GM12878 (cell line): ENCODE measurements at regions of chr2 and their contacts with region 1.

Region 1: GRCh38 chr2:190679813-190680591 is 31.1 kb downstream of the NAB1 start:
- DNase-seq: peak; percentile 54
- ATAC-seq: peak; percentile 81
- H3K4me3 ChIP-seq: peak overlapping the region; percentile 6; the same call in 1 of the 2 replicates
- H3K27ac ChIP-seq: peak overlapping the region; percentile 87
- H3K4me1 ChIP-seq: peaks cover 43% of the 10 kb centered on the region
- H3K27me3 ChIP-seq: no peaks in the 10 kb centered on the region
- CTCF ChIP-seq: peak; percentile 65 to 85 (median 82)
- EP300 ChIP-seq: 0 out of 4 replicates have a peak, but pooled peaks of 1 of the 2 experiments have one; percentile 42
- POLR2A ChIP-seq: peak; percentile 86
- RAD21 ChIP-seq: peak; percentile 84

Region 2: GRCh38 chr2:189848276-189848675 is 831.7 kb before region 1 on chr2:
- CTCF ChIA-PET with region 1: no interaction called
- POLR2A ChIA-PET with region 1: no interaction called
- RAD21 ChIA-PET with region 1: no interaction called
- SMC1A ChIA-PET with region 1: no interaction called
- in situ Hi-C with region 1: no loop called
- intact Hi-C with region 1: no loop called
- DNase-seq: no peak
- ATAC-seq: no peak
- H3K4me3 ChIP-seq: no peak overlapping the region
- H3K27ac ChIP-seq: no peak overlapping the region
- H3K4me1 ChIP-seq: no peaks in the 10 kb centered on the region
- H3K27me3 ChIP-seq: no peaks in the 10 kb centered on the region
- CTCF ChIP-seq: no peak
- EP300 ChIP-seq: no peak
- POLR2A ChIP-seq: no peak
- RAD21 ChIP-seq: no peak

Region 3: GRCh38 chr2:190382851-190383250 is 297.2 kb before region 1 on chr2:
- CTCF ChIA-PET with region 1: interaction called, 41 read pairs
- POLR2A ChIA-PET with region 1: no interaction called
- RAD21 ChIA-PET with region 1: interaction called, 10 read pairs
- SMC1A ChIA-PET with region 1: interaction called, 41 read pairs
- in situ Hi-C with region 1: no loop called
- intact Hi-C with region 1: loop called (anchors 1 kb)
- DNase-seq: peak; percentile 43
- ATAC-seq: peak; percentile 98
- H3K4me3 ChIP-seq: no peak overlapping the region
- H3K27ac ChIP-seq: no peak overlapping the region
- H3K4me1 ChIP-seq: no peaks in the 10 kb centered on the region
- H3K27me3 ChIP-seq: no peaks in the 10 kb centered on the region
- CTCF ChIP-seq: peak; percentile 70 to 73 (median 72)
- EP300 ChIP-seq: no peak
- POLR2A ChIP-seq: no peak
- RAD21 ChIP-seq: peak; percentile 98

Region 4: DNA sequence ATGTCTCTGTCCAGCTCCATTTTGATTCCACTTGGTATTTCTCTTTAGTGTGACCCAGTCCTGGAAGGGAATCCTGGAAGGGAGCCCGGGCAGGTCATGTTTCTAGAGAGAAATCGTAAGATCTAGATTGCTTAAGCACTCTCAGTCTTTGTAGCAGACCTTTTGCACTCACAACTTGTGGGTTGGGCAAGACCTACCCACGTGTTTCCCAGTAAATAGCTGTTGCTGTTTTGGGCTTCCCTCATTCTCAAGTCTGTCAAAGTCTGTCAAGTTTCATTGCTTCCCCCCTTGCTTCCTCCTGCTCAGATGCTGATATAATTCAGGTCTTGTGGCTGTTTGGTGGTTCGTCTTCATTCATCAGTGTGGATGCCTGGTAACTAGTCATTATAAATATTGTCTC is 128.1 kb before region 1 on chr2:
- CTCF ChIA-PET with region 1: interaction called, 6 read pairs
- POLR2A ChIA-PET with region 1: interaction called, 4 read pairs
- RAD21 ChIA-PET with region 1: interaction called, 13 read pairs
- SMC1A ChIA-PET with region 1: interaction called, 16 read pairs
- in situ Hi-C with region 1: no loop called
- intact Hi-C with region 1: no loop called
- DNase-seq: no peak
- ATAC-seq: peak; percentile 64
- H3K4me3 ChIP-seq: no peak overlapping the region
- H3K27ac ChIP-seq: no peak overlapping the region
- H3K4me1 ChIP-seq: no peaks in the 10 kb centered on the region
- H3K27me3 ChIP-seq: no peaks in the 10 kb centered on the region
- CTCF ChIP-seq: no peak
- EP300 ChIP-seq: no peak
- POLR2A ChIP-seq: no peak
- RAD21 ChIP-seq: no peak

Region 5: DNA sequence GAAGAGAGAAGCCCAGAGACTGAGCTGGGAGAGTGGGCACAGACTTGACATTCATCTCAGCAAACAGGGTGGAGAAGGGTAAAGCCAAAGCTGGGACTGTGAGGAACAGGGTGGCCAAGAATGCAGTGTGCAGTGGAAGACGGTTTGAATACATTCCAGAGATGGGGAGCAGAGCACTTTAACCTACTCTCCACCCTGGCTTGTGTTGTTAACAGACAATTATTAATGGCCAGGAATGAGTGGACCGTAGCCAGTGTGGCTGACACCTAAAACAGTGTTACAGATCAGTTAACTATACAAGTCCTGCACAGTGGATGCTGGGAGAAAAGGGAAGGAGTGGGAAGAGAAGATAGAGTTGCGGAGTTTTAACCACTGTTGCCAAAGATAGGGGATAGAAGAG is 38.5 kb before region 1 on chr2:
- CTCF ChIA-PET with region 1: interaction called, 78 read pairs
- POLR2A ChIA-PET with region 1: interaction called, 4 read pairs
- RAD21 ChIA-PET with region 1: interaction called, 58 read pairs
- SMC1A ChIA-PET with region 1: interaction called, 70 read pairs
- in situ Hi-C with region 1: no loop called
- intact Hi-C with region 1: no loop called
- DNase-seq: no peak
- ATAC-seq: peak; percentile 27
- H3K4me3 ChIP-seq: no peak overlapping the region
- H3K27ac ChIP-seq: no peak overlapping the region
- H3K4me1 ChIP-seq: 0 out of 2 replicates have a peak, but pooled peaks cover 3% of the 10 kb centered on the region
- H3K27me3 ChIP-seq: no peaks in the 10 kb centered on the region
- CTCF ChIP-seq: no peak
- EP300 ChIP-seq: no peak
- POLR2A ChIP-seq: no peak
- RAD21 ChIP-seq: no peak

Region 6: GRCh38 chr2:190698895-190699294 is 18.9 kb after region 1 on chr2:
- CTCF ChIA-PET with region 1: interaction called, 283 read pairs
- POLR2A ChIA-PET with region 1: interaction called, 29 read pairs
- RAD21 ChIA-PET with region 1: interaction called, 178 read pairs
- SMC1A ChIA-PET with region 1: interaction called, 385 read pairs
- in situ Hi-C with region 1: no loop called
- intact Hi-C with region 1: no loop called
- DNase-seq: no peak
- ATAC-seq: no peak
- H3K4me3 ChIP-seq: no peak overlapping the region
- H3K27ac ChIP-seq: no peak overlapping the region
- H3K4me1 ChIP-seq: peaks cover 25% of the 10 kb centered on the region
- H3K27me3 ChIP-seq: no peaks in the 10 kb centered on the region
- CTCF ChIP-seq: no peak
- EP300 ChIP-seq: no peak
- POLR2A ChIP-seq: no peak
- RAD21 ChIP-seq: no peak

Region 7: DNA sequence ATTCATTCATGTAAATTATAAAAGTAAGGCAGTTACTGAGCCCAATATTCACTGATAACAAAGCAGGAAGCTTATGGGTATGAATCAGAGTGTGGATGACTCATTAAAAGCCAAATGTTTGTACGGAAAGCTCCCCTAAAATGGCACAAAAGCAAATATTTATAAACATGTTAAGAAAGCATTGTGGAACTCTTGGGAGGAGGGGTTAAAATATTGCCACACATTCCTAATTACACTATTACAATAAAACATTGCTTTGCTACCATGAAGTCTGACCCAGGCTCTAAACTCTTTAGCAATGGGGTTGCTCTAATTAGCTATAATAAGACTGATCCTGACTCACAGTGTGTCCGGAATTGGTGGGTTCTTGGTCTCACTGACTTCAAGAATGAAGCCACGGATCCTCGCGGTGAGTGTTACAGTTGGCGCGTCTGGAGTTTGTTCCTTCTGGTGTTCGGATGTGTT is 79.8 kb after region 1 on chr2:
- CTCF ChIA-PET with region 1: interaction called, 3 read pairs
- POLR2A ChIA-PET with region 1: no interaction called
- RAD21 ChIA-PET with region 1: interaction called, 21 read pairs
- SMC1A ChIA-PET with region 1: interaction called, 13 read pairs
- in situ Hi-C with region 1: no loop called
- intact Hi-C with region 1: no loop called
- DNase-seq: no peak
- ATAC-seq: no peak
- H3K4me3 ChIP-seq: no peak overlapping the region
- H3K27ac ChIP-seq: no peak overlapping the region
- H3K4me1 ChIP-seq: no peaks in the 10 kb centered on the region
- H3K27me3 ChIP-seq: no peaks in the 10 kb centered on the region
- CTCF ChIP-seq: no peak
- EP300 ChIP-seq: no peak
- POLR2A ChIP-seq: no peak
- RAD21 ChIP-seq: no peak